PC-3 (cell line): ENCODE measurements at regions of chr20 and their contacts with region 1.

Region 1: GRCh38 chr20:16761305-16761829 is 13.2 kb downstream of the OTOR start:
- DNase-seq: peak; percentile 86
- ATAC-seq: peak; percentile 74
- H3K4me3 ChIP-seq: peak overlapping the region; percentile 41; the same call in 1 of the 2 replicates
- H3K27ac ChIP-seq: no peak overlapping the region
- H3K4me1 ChIP-seq: peaks cover 36% of the 10 kb centered on the region
- H3K27me3 ChIP-seq: no peaks in the 10 kb centered on the region
- CTCF ChIP-seq: peak; percentile 94

Region 2: DNA sequence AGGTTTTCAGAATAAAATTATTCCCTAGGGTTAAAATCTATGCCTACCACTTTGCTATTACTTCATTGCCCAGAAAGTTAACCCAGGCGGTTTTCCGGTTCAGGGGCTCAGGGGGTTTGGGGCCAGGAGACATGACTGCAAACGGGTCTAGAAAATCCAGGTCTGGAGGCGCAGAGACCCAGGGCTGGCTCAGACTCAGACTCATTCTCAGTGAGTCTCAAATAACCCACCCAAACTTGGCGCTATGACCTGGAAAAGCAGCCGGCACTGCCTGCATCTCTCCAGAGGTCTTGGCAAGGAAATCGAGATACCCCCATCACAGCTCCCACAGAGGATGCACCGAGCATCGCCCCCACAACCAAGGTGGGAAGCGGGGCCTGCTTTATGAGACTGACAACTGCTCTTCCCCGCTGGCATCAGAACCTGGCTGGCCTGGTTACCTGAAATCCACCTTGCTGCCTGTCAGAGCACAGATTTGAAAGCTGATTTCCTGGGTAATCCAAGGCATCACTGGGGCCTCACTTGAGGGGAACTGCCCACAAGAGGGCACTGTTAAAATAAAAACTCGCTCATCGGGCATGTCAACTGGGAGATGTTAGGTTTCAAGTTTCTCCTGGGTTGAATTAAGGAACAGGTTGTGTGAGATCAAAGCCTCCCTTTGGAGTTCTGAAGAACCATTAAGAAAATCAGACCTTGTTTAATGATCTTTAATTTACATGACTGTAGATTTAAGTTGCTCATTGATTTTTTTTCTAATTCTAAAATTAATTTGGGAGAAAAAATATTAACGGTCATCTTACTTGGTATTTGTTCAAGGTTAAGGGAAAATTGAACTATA is 243.2 kb before region 1 on chr20:
- CTCF ChIA-PET with region 1: no interaction called
- POLR2A ChIA-PET with region 1: no interaction called
- intact Hi-C with region 1: loop called (anchors 1 kb)
- DNase-seq: peak; percentile 78
- ATAC-seq: peak; percentile 98
- H3K4me3 ChIP-seq: no peak overlapping the region
- H3K27ac ChIP-seq: no peak overlapping the region
- H3K4me1 ChIP-seq: no peaks in the 10 kb centered on the region; the same call in 1 of the 2 replicates
- H3K27me3 ChIP-seq: no peaks in the 10 kb centered on the region
- CTCF ChIP-seq: peak; percentile 95

Region 3: DNA sequence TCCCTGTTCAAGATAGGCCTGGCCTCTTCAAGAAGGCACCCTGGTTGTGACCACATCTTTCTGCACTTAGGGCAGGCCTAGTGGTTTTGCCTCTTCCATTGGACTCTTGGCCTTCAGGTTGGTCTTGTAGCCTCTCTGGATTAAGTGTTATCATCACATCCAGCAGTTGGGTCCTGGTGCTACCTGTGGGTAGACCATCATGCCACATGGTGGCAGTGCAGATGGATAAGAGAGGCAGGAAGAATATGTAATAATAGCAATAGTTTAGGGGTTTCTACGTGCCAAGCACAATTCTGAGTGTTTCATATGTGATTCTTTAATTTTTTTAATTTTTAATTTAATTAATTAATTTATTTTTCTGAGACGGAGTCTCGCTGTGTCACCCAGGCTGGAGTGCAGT is 60.1 kb before region 1 on chr20:
- CTCF ChIA-PET with region 1: no interaction called
- POLR2A ChIA-PET with region 1: no interaction called
- intact Hi-C with region 1: loop called (anchors 1 kb)
- DNase-seq: peak; percentile 58
- ATAC-seq: peak; percentile 73
- H3K4me3 ChIP-seq: no peak overlapping the region
- H3K27ac ChIP-seq: no peak overlapping the region
- H3K4me1 ChIP-seq: no peaks in the 10 kb centered on the region
- H3K27me3 ChIP-seq: peaks cover 49% of the 10 kb centered on the region
- CTCF ChIP-seq: peak; percentile 65